HCT116 (cell line): ENCODE measurements at regions of chr5 and their contacts with region 1.

Region 1: GRCh38 chr5:82351754-82352145 is 73.6 kb upstream of the RPS23 start:
- DNase-seq: peak; percentile 61
- ATAC-seq: peak; percentile 75
- H3K4me3 ChIP-seq: no peak overlapping the region
- H3K27ac ChIP-seq: no peak overlapping the region
- H3K4me1 ChIP-seq: peaks cover 20 to 68% of the 10 kb centered on the region in 2 experiments
- H3K27me3 ChIP-seq: no peaks in the 10 kb centered on the region
- CTCF ChIP-seq: peak; percentile 60 to 82 (median 61); a peak in 5 of 6 replicates
- POLR2A ChIP-seq: no peak
- RAD21 ChIP-seq: peak; percentile 85

Region 2: GRCh38 chr5:82312373-82312856 is 39.3 kb before region 1 on chr5:
- CTCF ChIA-PET with region 1: interaction called, 16 read pairs
- POLR2A ChIA-PET with region 1: no interaction called
- RAD21 ChIA-PET with region 1: interaction called in 1 of 2 experiments, 3 read pairs
- intact Hi-C with region 1: no loop called
- DNase-seq: peak; percentile 54
- ATAC-seq: peak; percentile 80
- H3K4me3 ChIP-seq: peak overlapping the region in 1 of 2 experiments; percentile 29; a peak in 1 of 4 replicates
- H3K27ac ChIP-seq: peak overlapping the region; percentile 53
- H3K4me1 ChIP-seq: peaks cover 17 to 18% of the 10 kb centered on the region in 2 experiments
- H3K27me3 ChIP-seq: no peaks in the 10 kb centered on the region
- CTCF ChIP-seq: peak; percentile 65 to 97 (median 87); a peak in 5 of 6 replicates
- POLR2A ChIP-seq: no peak
- RAD21 ChIP-seq: peak; percentile 90

Region 3: DNA sequence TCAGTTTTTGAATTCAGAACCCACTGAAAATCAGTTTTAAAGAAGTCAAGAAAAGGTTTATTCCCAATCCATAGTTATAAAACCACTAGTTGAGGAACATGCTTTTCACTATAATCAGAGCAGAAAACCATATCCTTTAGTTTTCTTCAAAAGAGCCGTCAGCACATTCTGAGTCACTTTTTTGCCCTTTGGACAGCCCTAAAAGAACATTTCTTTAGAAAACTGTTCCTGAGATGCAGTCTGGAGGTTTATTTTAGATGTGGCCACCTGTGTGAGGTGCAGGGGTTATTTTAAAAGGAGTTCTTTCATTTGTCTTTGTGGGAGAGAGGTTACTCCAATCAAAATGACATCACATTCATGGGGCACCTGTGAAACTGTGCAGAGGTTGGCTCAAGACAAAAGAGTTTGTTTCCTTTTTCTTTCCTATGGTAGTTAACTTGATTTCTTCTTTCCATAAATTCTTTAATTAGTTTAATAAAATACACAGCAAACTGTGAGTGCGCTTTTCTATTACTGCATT is 148.0 kb after region 1 on chr5:
- CTCF ChIA-PET with region 1: no interaction called
- POLR2A ChIA-PET with region 1: no interaction called
- RAD21 ChIA-PET with region 1: no interaction called
- intact Hi-C with region 1: no loop called
- DNase-seq: no peak
- ATAC-seq: no peak
- H3K4me3 ChIP-seq: no peak overlapping the region
- H3K27ac ChIP-seq: no peak overlapping the region
- H3K4me1 ChIP-seq: no peaks in the 10 kb centered on the region
- H3K27me3 ChIP-seq: no peaks in the 10 kb centered on the region
- CTCF ChIP-seq: no peak
- POLR2A ChIP-seq: no peak
- RAD21 ChIP-seq: no peak

Region 4: GRCh38 chr5:82793808-82794419 is 442.2 kb after region 1 on chr5:
- CTCF ChIA-PET with region 1: no interaction called
- POLR2A ChIA-PET with region 1: no interaction called
- RAD21 ChIA-PET with region 1: no interaction called
- intact Hi-C with region 1: loop called (anchors 5 kb)
- DNase-seq: peak; percentile 26
- ATAC-seq: peak; percentile 62
- H3K4me3 ChIP-seq: no peak overlapping the region
- H3K27ac ChIP-seq: no peak overlapping the region
- H3K4me1 ChIP-seq: no peaks in the 10 kb centered on the region
- H3K27me3 ChIP-seq: no peaks in the 10 kb centered on the region
- CTCF ChIP-seq: peak; percentile 49 to 76 (median 74); a peak in 5 of 6 replicates
- POLR2A ChIP-seq: no peak
- RAD21 ChIP-seq: peak; percentile 60

Region 5: DNA sequence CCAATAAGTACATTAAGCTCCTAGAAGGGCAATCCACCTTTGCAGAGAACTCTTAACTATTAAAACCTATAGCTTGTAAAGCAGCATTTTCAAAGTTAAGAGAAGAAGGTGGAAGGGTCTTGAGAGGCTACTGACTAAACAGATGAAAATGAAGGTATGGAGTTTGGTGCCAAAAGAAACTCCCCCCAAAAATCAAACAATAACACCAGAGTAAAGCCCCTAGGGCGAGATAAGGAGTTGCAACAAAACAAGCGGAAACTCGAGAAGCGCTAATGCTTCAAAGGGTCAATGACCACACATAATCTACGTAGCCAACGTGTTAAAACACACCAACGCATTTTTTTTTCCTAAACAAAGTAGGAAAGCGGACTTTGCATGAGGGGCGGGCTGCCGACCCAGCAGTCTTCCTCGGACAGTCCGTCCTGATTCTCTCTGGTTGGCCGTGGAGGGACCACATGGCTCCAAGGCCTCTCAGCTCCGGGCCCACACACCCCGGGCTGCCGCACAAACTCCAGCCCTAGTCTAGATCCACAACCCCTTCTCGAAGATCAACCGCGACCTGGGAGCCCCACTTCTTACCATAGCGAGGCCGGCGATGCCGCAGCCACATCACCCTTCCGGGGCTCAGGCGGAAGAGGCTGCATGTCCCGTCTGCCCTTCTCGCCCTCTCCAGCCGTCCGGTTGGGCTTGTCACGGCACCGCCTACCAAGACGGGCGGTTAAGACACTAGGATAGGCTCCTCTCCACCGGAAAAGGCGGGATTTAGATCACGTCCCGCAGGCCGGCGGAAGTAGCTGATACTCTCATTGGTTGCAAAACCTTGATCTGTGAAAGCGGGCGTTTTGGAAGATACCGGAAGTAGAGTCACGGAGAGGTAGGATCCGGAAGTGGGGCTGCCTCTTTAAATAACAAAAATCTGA is 725.3 kb after region 1 on chr5 and contains the starts of genes TMEM167A and XRCC4:
- CTCF ChIA-PET with region 1: no interaction called
- POLR2A ChIA-PET with region 1: no interaction called
- RAD21 ChIA-PET with region 1: no interaction called
- intact Hi-C with region 1: loop called (anchors 10 kb)
- DNase-seq: peak; percentile 98
- ATAC-seq: peak; percentile 99
- H3K4me3 ChIP-seq: peak within 1 kb of the TSS; percentile 86 to 93
- H3K27ac ChIP-seq: peak within 1 kb of the TSS; percentile 64
- H3K4me1 ChIP-seq: peaks cover 9 to 18% of the 10 kb centered on the region in 2 experiments; a peak in 3 of 4 replicates
- H3K27me3 ChIP-seq: no peaks in the 10 kb centered on the region
- CTCF ChIP-seq: no peak
- POLR2A ChIP-seq: peak; percentile 79
- RAD21 ChIP-seq: no peak
- total RNA-seq, gene TMEM167A: 108 TPM
- total RNA-seq, gene XRCC4: 24.6 TPM

Region 6: DNA sequence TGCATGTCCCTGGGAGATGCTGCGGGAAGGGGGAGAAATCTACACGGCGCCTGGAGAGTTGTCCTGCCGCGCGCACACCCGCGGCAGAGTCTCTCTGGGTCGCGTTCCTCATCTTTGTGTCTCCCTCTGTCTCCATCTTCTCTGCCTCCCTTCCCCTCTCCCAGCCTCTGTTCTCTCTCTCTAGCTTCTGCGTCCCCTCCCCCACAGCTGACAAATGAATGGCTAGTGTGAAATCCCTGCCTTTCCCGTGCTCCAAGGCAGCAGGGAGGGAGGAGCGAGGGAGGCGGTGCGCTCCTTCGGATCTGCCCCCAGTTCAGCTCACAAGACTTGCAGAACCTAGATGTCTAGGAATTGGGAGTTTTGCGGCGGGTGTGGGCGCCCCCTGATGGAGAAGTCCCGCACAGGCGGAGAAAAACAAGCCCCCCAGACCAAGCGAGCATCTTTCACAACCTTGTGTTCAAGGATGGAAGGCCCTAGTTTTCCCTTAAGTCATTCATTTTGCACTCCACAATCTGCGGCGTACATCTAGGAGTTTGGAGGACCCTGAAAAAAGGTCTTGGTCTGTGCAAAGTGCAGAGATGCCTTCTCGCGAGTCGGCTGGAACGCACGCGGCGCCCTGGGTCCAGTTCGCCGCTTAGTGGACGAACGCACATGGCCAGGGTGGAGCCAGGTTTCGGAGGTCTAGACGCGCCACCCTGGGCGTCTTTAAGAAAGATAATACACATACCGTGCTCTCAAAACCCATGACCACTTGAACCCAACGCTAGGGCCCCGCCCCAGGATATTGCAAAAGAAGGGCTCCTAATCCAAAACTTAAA is 1121.8 kb after region 1 on chr5:
- CTCF ChIA-PET with region 1: no interaction called
- POLR2A ChIA-PET with region 1: no interaction called
- RAD21 ChIA-PET with region 1: interaction called in 1 of 2 experiments, 3 read pairs
- intact Hi-C with region 1: loop called (anchors 2 kb)
- DNase-seq: peak; percentile 86
- ATAC-seq: peak; percentile 65
- H3K4me3 ChIP-seq: peak overlapping the region; percentile 55 to 62
- H3K27ac ChIP-seq: peak overlapping the region; percentile 63
- H3K4me1 ChIP-seq: peaks cover 13 to 40% of the 10 kb centered on the region in 2 experiments
- H3K27me3 ChIP-seq: no peaks in the 10 kb centered on the region
- CTCF ChIP-seq: peak; percentile 44 to 86 (median 70); a peak in 5 of 6 replicates
- POLR2A ChIP-seq: no peak
- RAD21 ChIP-seq: peak; percentile 81

Region 7: DNA sequence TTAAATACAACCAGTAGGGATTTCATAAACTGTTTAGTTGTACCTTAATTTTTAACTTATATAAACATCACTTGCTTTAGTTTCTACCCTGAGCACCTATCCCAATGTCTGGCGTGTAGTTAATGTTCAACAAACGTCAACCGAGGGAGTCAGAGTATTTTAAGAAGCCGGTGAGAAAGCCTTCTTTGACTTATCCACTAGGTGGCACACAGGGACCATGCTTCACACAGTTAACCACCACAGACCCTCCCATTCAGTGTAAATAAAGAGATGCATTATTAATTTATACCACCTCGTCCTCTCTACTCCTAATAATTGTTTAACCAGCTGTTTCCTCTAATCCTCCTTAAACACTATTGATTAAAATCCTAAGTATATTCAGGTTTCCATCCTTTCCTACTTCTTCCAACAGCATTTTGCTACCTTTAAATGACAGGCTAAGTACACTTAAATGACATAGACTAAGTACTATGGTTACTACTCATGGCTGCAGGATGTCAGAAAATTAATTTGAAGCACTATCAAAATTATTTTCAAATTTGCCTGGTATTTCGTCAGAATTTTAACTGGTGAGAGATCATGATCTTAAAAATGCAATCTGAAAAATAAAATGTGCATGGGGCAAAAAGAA is 1366.6 kb after region 1 on chr5:
- CTCF ChIA-PET with region 1: interaction called, 4 read pairs
- POLR2A ChIA-PET with region 1: no interaction called
- RAD21 ChIA-PET with region 1: no interaction called
- intact Hi-C with region 1: loop called (anchors 10 kb)
- DNase-seq: peak; percentile 59
- ATAC-seq: peak; percentile 62
- H3K4me3 ChIP-seq: no peak overlapping the region
- H3K27ac ChIP-seq: no peak overlapping the region
- H3K4me1 ChIP-seq: peaks cover 8 to 16% of the 10 kb centered on the region in 2 experiments; a peak in 3 of 4 replicates
- H3K27me3 ChIP-seq: no peaks in the 10 kb centered on the region
- CTCF ChIP-seq: peak; percentile 62 to 91 (median 76); a peak in 5 of 6 replicates
- POLR2A ChIP-seq: no peak
- RAD21 ChIP-seq: peak; percentile 88